ENCODE measurements at regions of chr14 and their contacts with region 1.

Region 1: DNA sequence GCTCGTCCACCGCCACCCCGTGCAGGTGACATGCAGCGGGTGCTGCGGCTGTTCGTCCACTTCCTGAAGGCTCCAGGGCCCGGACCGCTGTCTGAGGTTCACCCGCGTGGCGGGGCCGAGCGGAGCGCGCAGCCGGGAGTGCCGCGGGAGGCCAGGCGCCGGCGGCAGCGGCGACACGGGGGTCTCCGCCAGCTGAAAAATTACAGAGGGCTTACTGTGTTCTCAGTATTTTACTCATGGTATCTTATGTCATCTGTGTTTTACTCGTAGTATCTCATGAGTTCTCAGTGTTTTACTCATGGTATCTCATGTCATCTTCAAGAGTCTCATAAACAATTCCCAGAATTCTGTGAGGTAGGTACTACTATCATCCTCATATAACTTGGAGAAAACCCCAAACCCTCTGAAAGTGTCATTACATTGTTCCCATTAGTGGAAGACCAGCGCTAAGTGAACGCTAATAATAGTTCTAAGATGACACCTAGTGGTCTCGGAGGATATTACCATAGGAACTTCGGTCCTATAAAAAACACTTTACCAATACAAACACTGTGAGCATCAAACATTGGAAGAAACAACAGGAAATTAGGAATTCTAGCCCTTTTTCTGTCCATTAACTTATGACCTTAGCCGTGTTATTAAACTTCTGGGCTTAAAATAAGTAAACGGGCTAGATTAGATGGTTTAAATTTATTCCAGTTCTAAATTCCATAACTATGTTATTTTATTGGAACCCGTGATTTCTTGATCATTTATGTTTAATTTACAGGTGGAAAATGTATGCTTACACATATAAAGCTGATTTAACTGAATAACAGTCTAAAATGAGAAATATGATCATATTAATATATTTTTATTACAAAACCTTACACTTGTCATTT is 32.4 kb downstream of the AK7 start:
- DNase-seq: peak in 5 of 10 donors; percentile 11 to 88 (median 21)

Region 2: GRCh38 chr14:96100161-96101029 is 324.0 kb before region 1 on chr14:
- intact Hi-C with region 1: loop called (anchors 2 kb)
- DNase-seq: peak; percentile 65 to 96 (median 83)

Region 3: DNA sequence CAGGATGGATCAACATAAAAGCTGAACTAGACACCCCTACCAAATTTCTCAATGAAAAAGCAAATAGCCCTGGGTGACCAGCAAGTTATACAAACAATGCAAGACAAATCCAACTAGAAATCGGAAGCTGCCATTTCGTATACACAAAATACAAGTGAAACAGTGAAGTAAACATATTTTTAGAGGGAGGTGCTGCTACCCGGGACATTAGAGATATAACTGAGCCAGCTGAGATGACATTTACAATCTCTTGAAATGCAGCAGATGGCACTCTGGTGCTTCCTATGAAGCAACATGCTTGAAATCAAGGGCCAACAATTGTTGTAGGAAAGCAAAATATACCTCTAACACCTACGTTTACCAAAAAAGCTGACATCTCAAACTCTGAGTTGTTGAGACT is 142.9 kb before region 1 on chr14:
- intact Hi-C with region 1: loop called (anchors 5 kb)
- DNase-seq: no peak

Region 4: GRCh38 chr14:96297000-96297399 is 127.3 kb before region 1 on chr14:
- intact Hi-C with region 1: loop called (anchors 1 kb)
- DNase-seq: no peak

Region 5: GRCh38 chr14:96368534-96368933 is 55.8 kb before region 1 on chr14:
- intact Hi-C with region 1: no loop called
- DNase-seq: no peak

Region 6: DNA sequence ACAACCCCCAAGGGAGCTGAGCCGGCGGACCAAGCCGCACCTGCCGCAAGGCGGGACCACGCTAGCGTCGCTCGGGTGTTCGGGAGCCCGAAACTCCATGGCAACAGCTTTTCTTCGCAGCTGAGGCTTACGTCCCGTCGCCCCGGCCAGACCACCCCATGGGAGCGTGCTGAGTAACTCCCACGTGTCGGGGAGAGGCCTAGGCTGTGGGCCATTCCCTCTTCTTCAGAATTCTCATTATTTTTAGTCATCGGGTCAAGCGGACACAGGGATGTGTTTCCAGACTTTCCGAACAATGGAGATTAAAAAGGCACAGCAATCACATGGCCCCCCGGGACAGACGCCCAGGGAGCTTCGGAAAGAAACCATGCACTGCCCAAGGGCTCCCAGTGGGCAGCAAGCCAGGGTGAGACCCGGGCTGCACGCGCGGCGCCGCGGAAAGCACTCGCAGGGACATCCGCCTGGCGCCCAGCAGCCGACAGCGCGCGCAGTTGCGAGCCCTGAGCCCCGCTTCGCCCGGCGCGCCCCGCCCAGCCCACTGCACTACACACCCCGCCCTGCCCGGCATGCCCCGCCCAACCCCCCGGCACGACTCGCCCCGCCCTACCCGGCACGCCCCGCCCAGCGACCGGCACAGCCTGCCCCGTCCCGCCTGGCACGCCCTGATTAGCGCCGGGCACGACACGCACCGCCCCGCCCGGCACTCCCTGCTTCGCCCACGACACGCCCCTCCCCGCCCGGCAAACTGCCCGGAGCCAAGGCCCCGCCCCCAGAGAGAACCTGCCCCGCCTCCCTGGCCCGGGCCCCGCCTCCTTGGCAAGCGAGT is 32.8 kb before region 1 on chr14:
- intact Hi-C with region 1: no loop called
- DNase-seq: peak; percentile 90 to 99 (median 94)

Measured in posterior cingulate gyrus (tissue), 11 donors.